WTC11 (cell line): ENCODE measurements at regions of chr2 and their contacts with region 1.

Region 1: DNA sequence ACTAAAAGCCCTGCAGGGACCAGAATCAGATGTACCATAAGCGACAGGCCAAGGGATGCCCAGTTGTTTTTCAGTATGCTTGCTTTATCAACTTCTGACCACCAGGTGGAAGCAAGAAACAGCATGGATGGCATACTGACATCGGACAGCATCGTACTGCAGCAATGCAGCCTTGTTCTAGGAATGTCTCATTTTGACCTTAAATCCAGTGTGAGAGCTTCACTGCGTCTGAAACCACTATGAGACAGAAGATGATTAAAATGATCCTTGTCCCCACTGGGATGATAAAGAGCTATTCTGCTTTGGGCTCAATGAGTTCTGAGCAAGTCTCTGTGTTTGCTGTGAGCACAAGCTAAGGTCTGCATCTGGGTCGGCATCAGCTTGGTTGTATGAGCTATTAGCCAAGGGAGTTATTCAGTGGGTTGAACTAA is 54.3 kb downstream of the CDK15 start:
- DNase-seq: peak; percentile 51
- ATAC-seq: peak; percentile 87
- H3K4me3 Mint-ChIP-seq: no peak overlapping the region
- H3K27ac Mint-ChIP-seq: no peak overlapping the region
- H3K4me1 Mint-ChIP-seq: peaks cover 37% of the 10 kb centered on the region
- H3K27me3 Mint-ChIP-seq: peaks cover 7% of the 10 kb centered on the region
- CTCF ChIP-seq: peak; percentile 60

Region 2: DNA sequence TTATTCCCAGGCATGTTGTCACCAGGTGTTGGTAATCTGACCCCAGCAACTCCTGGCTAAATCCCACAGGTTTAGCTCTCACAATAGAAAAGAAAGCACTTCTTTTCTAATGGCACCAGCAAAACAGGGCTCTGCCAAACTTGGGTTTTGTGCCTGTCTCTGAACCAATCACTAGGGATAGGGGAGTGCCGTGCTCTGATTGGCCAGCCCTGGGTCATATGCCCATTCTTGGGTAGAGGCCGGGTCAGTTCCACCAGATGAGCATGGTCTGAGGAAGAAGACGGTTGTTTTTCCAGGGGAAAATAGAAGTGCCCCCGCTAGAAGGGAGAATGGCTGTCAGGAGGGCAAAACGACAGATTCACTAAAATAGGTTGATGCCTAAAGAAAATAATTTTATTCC is 39.6 kb before region 1 on chr2:
- CTCF ChIA-PET with region 1: no interaction called
- POLR2A ChIA-PET with region 1: no interaction called
- DNase-seq: no peak
- ATAC-seq: peak; percentile 93
- H3K4me3 Mint-ChIP-seq: no peak overlapping the region
- H3K27ac Mint-ChIP-seq: no peak overlapping the region
- H3K4me1 Mint-ChIP-seq: 0 out of 2 replicates have a peak, but pooled peaks cover 7% of the 10 kb centered on the region
- H3K27me3 Mint-ChIP-seq: 0 out of 2 replicates have a peak, but pooled peaks cover 2% of the 10 kb centered on the region
- CTCF ChIP-seq: no peak

Region 3: GRCh38 chr2:201952187-201952586 is 91.5 kb after region 1 on chr2:
- CTCF ChIA-PET with region 1: interaction called, 16 read pairs
- POLR2A ChIA-PET with region 1: no interaction called
- DNase-seq: peak; percentile 57
- ATAC-seq: peak; percentile 70
- H3K4me3 Mint-ChIP-seq: no peak overlapping the region
- H3K27ac Mint-ChIP-seq: peak overlapping the region; percentile 24; the same call in 1 of the 2 replicates
- H3K4me1 Mint-ChIP-seq: peaks cover 73% of the 10 kb centered on the region
- H3K27me3 Mint-ChIP-seq: no peaks in the 10 kb centered on the region; the same call in 1 of the 2 replicates
- CTCF ChIP-seq: no peak

Region 4: DNA sequence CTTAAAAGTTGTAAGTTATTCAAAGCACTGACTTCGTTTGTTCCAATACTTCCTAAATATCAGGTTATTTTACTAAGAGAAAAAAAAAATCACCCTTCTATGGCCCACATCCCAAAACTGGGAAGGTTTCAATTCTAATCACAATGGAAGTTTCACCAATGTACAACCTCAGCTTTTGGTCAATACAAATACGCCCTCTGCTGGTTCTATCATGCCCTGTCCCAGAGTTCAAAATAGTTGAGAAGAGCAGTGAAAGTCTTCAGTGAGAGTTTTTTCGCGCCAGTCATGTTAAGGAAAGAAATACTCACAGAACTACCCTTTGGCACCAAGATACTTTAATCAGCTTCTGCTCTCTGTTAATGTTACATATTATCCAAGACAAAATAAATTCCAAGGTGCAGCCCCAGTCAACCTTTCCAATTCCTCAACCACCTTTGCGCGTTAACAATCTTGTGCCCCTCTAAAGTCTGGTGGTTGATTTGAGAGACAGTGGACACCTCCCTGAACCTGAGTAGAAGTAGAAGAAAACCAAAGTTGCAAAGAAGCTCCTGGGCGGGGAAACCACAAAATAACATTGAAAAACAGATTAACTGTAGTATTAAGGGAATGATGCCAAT is 317.8 kb after region 1 on chr2:
- CTCF ChIA-PET with region 1: interaction called, 12 read pairs
- POLR2A ChIA-PET with region 1: no interaction called
- DNase-seq: peak; percentile 65
- ATAC-seq: peak; percentile 93
- H3K4me3 Mint-ChIP-seq: no peak overlapping the region
- H3K27ac Mint-ChIP-seq: no peak overlapping the region
- H3K4me1 Mint-ChIP-seq: no peaks in the 10 kb centered on the region
- H3K27me3 Mint-ChIP-seq: no peaks in the 10 kb centered on the region; the same call in 1 of the 2 replicates
- CTCF ChIP-seq: peak; percentile 54; the same call in 1 of the 2 replicates